Right ventricle myocardium inferior (tissue), 1 donor: ENCODE measurements at regions of chr2 and their contacts with region 1.

Region 1: GRCh38 chr2:222318026-222318711 is 19.4 kb upstream of the PAX3 start:
- DNase-seq: no peak
- ATAC-seq: peak; percentile 75

Region 2: DNA sequence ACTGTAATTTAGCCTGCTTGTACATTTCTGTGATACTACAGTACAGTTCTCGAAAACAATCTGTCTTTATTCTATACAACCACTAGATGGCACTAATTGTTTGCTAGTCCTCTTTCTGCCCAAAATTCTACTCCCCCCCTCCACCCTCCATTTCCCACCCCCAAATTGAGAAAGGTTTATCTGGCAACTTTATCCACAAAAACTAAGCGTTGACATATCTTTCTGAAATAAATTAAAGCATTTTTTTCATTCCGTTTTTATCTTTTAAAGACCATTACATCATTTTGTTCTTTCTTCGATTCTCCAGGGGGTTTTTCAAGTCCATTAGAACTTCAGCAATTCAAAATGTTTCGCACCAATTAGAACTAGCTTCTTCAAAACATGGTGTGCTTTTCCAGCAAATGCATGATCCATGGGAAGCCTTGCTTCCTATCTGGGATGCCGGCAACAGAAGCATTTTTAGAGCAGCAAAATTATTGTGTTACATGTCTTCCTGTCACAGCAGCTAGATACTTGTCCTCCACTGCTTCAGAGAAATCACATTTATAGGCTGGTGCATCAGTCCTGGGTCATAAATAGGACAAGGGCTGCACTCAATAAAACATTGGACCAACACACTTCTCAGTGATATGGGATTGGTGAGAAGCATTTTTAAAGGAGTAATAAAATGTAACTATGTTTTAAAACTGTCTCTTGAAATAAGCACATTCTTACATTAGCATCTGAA is 260.7 kb before region 1 on chr2:
- intact Hi-C with region 1: loop called (anchors 10 kb)
- DNase-seq: no peak
- ATAC-seq: peak; percentile 79

Region 3: GRCh38 chr2:222283634-222284033 is 34.5 kb before region 1 on chr2:
- intact Hi-C with region 1: no loop called
- DNase-seq: no peak
- ATAC-seq: peak; percentile 26

Region 4: GRCh38 chr2:222305516-222306392 is 12.4 kb before region 1 on chr2:
- intact Hi-C with region 1: no loop called
- DNase-seq: no peak
- ATAC-seq: no peak

Region 5: GRCh38 chr2:222399038-222399783 is 81.0 kb after region 1 on chr2:
- intact Hi-C with region 1: loop called (anchors 2 kb)
- DNase-seq: no peak
- ATAC-seq: peak; percentile 83

Region 6: DNA sequence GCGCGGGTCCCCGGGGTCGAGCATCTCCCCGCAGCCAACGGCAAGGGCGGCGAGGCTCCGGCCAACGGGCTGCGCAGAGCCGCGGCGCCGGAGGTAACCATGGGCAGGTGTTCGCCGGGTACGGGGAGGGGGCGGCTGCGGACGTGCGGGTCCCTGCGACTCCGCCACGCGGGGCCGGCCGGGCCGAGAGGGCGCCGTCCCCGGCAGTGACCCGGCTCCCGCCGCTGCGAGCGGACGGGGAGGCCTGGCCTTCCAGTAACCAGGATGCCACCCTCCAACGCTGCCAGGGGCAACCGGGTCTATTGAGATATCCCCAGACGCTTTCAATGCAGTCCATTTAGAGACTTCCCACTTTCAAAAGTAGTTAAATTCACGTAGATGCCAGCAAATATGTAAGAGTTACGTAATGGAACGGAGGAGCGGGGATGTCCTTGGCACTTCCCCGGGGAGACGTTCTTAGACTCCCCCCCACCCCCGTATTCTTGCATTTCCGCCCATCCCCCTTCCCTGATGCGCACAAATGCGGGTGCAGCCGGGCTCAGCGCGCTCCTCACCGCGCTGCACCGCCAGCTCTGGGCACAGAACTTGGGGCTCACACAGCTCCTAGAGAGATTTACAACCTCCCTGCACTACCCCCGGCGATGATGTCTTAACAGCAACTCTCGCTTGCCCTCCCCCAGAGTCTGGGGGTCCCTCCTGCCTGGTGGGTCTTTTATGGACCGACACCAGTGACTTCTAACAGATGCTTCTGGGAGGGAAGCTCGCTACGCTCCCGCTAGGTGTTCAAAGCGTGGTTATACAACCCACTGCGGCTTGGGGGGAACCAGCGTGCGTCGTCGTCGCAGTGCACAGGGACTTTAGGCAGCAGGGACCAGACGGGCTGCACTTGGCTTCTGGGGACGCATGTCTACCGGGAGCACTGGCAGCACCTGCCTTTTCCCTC is 106.8 kb after region 1 on chr2:
- intact Hi-C with region 1: loop called (anchors 2 kb)
- DNase-seq: peak; percentile 60
- ATAC-seq: peak; percentile 60

Region 7: GRCh38 chr2:222561817-222562645 is 243.9 kb after region 1 on chr2:
- intact Hi-C with region 1: loop called (anchors 1 kb)
- DNase-seq: no peak
- ATAC-seq: peak; percentile 63

Region 8: DNA sequence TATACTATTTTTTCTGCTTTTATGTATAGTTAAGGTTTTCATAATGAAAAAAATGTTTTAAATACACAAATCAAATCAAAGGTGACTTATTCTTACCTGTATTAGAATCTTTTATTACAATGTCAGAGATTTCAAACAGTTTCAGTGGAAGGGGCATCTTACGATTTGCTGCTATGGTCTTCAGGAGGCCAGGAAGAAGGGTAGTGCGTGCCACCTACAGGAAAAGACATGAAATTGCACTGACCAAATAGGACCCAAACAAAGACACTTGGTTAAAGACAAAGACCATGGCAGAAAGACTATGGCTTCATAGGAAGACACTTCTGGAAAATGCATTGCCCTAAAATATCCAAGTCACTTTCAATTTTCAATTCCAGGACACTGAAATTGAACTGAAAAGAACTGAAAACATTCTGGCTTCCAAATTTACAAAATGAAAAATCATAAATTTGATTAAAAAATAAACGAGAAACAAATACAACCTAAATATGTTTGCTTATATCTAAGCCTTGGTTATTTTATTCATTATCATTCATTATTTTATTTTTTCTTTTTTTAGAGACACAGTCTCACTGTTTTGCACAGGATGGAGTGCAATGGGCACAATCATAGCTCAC is 295.7 kb after region 1 on chr2:
- intact Hi-C with region 1: loop called (anchors 1 kb)
- DNase-seq: no peak
- ATAC-seq: no peak